SK-N-SH (cell line): ENCODE measurements at regions of chr19 and their contacts with region 1.

Region 1: GRCh38 chr19:4400135-4400936 is at the start of gene SH3GL1:
- DNase-seq: peak; percentile 92
- H3K4me3 ChIP-seq: peak within 1 kb of the TSS; percentile 70 to 82
- H3K27ac ChIP-seq: peak within 1 kb of the TSS; percentile 68 to 85
- H3K4me1 ChIP-seq: peaks cover 11 to 14% of the 10 kb centered on the region in 2 experiments; a peak in 3 of 4 replicates
- H3K27me3 ChIP-seq: no peaks in the 10 kb centered on the region
- CTCF ChIP-seq: peak; percentile 94
- EP300 ChIP-seq: peak in 1 of 2 experiments; percentile 14; a peak in 1 of 4 replicates
- RAD21 ChIP-seq: peak; percentile 50
- polyA plus RNA-seq, gene SH3GL1: 62.5 and 82.8 TPM in 2 replicates

Region 2: DNA sequence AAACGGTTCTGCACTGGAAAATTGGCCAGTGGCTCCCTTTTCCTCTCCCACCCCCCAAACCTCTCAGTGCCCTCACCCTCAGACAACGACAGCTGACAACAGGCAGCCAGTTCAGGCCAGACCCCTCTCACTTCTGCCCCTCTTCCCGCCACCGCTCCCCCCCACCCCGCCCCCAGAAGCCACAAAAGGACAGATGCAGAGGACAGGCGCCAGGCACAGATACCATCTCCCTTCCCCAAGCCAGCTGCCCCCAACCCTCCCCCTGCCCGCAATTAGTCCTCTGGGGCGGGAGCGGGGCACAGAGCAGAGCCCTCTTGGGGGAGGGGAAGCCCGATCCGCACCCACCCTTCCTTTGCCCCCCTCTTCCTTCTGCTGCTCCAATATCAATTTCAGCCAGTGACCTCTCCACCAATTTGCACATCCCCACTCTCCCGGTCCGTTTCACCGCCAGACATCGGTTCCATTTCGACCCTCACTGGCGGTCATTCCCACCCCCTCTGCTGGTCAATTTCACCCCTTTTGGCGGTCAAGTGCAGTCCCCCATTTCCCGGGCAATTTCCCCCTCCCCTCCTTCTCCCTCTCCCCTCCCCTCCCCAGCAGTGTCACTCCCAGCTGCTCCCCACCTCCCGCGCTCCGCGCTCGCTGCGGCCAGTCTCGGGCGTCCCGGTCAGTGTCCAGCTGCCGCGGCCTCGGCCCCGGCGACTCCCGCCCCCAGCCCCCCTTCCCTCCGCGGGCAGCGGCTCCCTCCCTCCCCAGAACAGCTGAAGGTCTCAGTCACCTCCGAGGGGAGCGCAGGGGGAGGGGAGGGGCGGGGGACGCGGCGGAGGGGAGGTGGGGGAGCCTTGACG is 121.7 kb before region 1 on chr19 and contains the start of gene SHD:
- CTCF ChIA-PET with region 1: interaction called, 14 read pairs
- POLR2A ChIA-PET with region 1: no interaction called
- DNase-seq: peak; percentile 92
- H3K4me3 ChIP-seq: peak within 1 kb of the TSS; percentile 49 to 50; a peak in 3 of 4 replicates
- H3K27ac ChIP-seq: peak within 1 kb of the TSS; percentile 50 to 99; a peak in 3 of 4 replicates
- H3K4me1 ChIP-seq: peaks cover 0 to 12% of the 10 kb centered on the region in 2 experiments; a peak in 1 of 4 replicates
- H3K27me3 ChIP-seq: peaks cover 12% of the 10 kb centered on the region
- CTCF ChIP-seq: no peak
- EP300 ChIP-seq: peak in 1 of 2 experiments; percentile 87; a peak in 1 of 4 replicates
- RAD21 ChIP-seq: no peak
- polyA plus RNA-seq, gene SHD: 3.1 and 6.9 TPM in 2 replicates

Region 3: GRCh38 chr19:4369888-4370260 is 30.5 kb before region 1 on chr19:
- CTCF ChIA-PET with region 1: interaction called, 15 read pairs
- POLR2A ChIA-PET with region 1: no interaction called
- DNase-seq: no peak
- H3K4me3 ChIP-seq: no peak overlapping the region
- H3K27ac ChIP-seq: peak overlapping the region in 1 of 2 experiments; percentile 22; a peak in 1 of 4 replicates
- H3K4me1 ChIP-seq: peaks cover 15 to 51% of the 10 kb centered on the region in 2 experiments; a peak in 3 of 4 replicates
- H3K27me3 ChIP-seq: no peaks in the 10 kb centered on the region
- CTCF ChIP-seq: no peak
- EP300 ChIP-seq: no peak
- RAD21 ChIP-seq: peak; percentile 33

Region 4: DNA sequence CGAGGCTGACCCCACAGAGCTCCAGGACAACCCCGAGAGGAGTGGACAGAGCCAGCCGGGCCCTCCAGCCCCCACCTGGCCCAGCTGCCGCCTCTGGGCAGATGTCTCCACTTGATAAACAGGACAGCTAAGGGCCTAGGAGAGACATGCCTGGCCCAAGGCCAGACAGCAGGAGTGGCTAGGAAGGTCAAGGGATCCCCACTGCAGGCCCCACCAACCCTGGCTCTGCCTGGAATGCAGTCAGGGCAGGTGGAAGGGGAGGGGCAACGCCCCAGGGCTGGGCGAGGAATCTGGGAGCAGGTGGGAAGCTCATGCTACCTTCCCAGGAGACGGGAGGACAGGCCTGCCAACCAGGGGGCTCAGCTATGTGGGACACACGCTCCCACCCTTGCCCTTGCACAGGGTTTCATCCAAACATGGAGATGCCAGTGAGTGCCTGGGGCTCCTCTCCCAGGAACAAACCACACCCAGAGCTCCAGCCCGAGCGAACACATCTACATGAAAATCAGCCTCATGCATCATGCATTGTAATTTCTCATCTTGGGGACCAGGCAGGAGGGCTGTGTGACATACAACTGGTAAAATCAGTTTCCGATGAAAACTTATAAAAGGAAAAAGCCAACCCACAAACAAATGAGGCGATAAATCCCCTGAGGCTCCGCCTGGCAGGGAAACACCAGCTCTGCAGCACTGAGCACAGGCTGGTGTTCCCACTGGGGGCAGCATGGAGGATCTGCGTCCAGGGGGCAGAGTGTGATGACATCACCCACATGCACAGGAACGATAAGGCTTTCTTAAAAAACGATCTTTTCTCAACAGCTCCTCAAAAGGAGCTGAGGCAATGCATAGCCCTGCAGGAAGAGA is 24.9 kb before region 1 on chr19:
- CTCF ChIA-PET with region 1: interaction called, 15 read pairs
- POLR2A ChIA-PET with region 1: no interaction called
- DNase-seq: peak; percentile 73
- H3K4me3 ChIP-seq: no peak overlapping the region
- H3K27ac ChIP-seq: peak overlapping the region; percentile 80 to 92
- H3K4me1 ChIP-seq: peaks cover 33 to 72% of the 10 kb centered on the region in 2 experiments
- H3K27me3 ChIP-seq: no peaks in the 10 kb centered on the region
- CTCF ChIP-seq: peak; percentile 52
- EP300 ChIP-seq: 0 out of 4 replicates have a peak, but pooled peaks of 1 of the 2 experiments have one; percentile 35
- RAD21 ChIP-seq: no peak

Region 5: GRCh38 chr19:4415352-4415751 is 15.0 kb after region 1 on chr19:
- CTCF ChIA-PET with region 1: interaction called, 29 read pairs
- POLR2A ChIA-PET with region 1: interaction called, 6 read pairs
- DNase-seq: no peak
- H3K4me3 ChIP-seq: no peak overlapping the region
- H3K27ac ChIP-seq: peak overlapping the region in 1 of 2 experiments; percentile 31; a peak in 1 of 4 replicates
- H3K4me1 ChIP-seq: peaks cover 0 to 3% of the 10 kb centered on the region in 2 experiments; a peak in 1 of 4 replicates
- H3K27me3 ChIP-seq: no peaks in the 10 kb centered on the region
- CTCF ChIP-seq: no peak
- EP300 ChIP-seq: no peak
- RAD21 ChIP-seq: no peak

Region 6: GRCh38 chr19:4423416-4424126 is 23.2 kb after region 1 on chr19:
- CTCF ChIA-PET with region 1: interaction called, 10 read pairs
- POLR2A ChIA-PET with region 1: no interaction called
- DNase-seq: no peak
- H3K4me3 ChIP-seq: no peak overlapping the region
- H3K27ac ChIP-seq: no peak overlapping the region
- H3K4me1 ChIP-seq: no peaks in the 10 kb centered on the region
- H3K27me3 ChIP-seq: no peaks in the 10 kb centered on the region
- CTCF ChIP-seq: no peak
- EP300 ChIP-seq: no peak
- RAD21 ChIP-seq: no peak

Region 7: DNA sequence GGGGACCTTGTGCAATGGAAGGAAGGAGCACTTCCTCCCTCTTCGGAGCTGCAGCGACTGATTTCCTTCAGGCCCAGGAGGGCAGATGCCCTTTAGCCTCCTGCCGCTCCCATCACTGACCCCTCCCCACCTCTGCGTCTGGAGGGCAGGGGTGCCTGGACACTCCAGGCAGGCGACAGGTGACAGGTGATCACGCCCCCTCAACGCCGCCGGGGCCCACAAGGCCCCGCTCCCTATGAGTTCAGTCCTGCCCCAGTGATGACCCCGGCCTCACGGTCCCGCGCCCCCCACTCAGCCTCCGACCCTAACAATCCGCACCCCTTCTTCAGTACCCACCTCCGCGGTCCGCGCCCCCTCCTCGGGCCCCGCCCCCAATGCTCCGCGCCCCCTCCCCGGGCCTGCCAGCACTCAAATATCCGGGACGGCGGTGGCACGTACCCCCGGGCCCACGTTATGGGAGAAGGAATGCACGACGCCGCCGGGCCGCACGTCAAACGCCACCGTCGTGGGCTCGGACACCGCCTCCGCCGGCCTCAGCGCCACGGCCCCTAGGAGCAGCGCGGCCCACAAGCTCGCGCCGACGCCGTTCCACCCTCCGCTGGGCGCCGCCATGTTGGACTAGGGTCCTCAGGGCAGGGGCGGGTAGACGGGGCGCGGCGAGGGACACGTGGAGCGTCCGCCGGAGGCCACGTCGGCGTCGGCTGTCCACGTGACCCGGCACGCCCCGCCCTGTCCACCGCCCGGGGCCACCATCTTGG is 269.6 kb after region 1 on chr19 and contains the start of gene MYDGF:
- CTCF ChIA-PET with region 1: no interaction called
- POLR2A ChIA-PET with region 1: no interaction called
- DNase-seq: peak; percentile 100
- H3K4me3 ChIP-seq: peak within 1 kb of the TSS; percentile 67 to 94
- H3K27ac ChIP-seq: peak within 1 kb of the TSS; percentile 23 to 57; a peak in 3 of 4 replicates
- H3K4me1 ChIP-seq: peaks cover 0 to 7% of the 10 kb centered on the region in 2 experiments; a peak in 2 of 4 replicates
- H3K27me3 ChIP-seq: no peaks in the 10 kb centered on the region
- CTCF ChIP-seq: no peak
- EP300 ChIP-seq: no peak
- RAD21 ChIP-seq: no peak
- polyA plus RNA-seq, gene MYDGF: 188 and 312 TPM in 2 replicates